ENCODE measurements at regions of chr13 and their contacts with region 1.

Region 1: GRCh38 chr13:29583073-29583785 is 12.3 kb downstream of the SLC7A1 start:
- DNase-seq: no peak
- ATAC-seq: no peak
- H3K4me3 ChIP-seq: no peak overlapping the region
- H3K27ac ChIP-seq: no peak overlapping the region
- H3K4me1 ChIP-seq: peaks cover 59% of the 10 kb centered on the region
- H3K27me3 ChIP-seq: no peaks in the 10 kb centered on the region
- CTCF ChIP-seq: no peak
- POLR2A ChIP-seq: no peak

Region 2: GRCh38 chr13:29508130-29508875 is 74.9 kb before region 1 on chr13:
- intact Hi-C with region 1: loop called (anchors 10 kb)
- DNase-seq: peak; percentile 87 to 90 (median 88)
- ATAC-seq: peak; percentile 87
- H3K4me3 ChIP-seq: no peak overlapping the region
- H3K27ac ChIP-seq: peak overlapping the region in 1 of 4 donors; percentile 12
- H3K4me1 ChIP-seq: peaks cover 5% of the 10 kb centered on the region
- H3K27me3 ChIP-seq: no peaks in the 10 kb centered on the region
- CTCF ChIP-seq: peak; percentile 91 to 96 (median 95)
- POLR2A ChIP-seq: no peak

Measured in body of pancreas (tissue), 4 donors.